ENCODE measurements at regions of chr5 and their contacts with region 1.

Region 1: DNA sequence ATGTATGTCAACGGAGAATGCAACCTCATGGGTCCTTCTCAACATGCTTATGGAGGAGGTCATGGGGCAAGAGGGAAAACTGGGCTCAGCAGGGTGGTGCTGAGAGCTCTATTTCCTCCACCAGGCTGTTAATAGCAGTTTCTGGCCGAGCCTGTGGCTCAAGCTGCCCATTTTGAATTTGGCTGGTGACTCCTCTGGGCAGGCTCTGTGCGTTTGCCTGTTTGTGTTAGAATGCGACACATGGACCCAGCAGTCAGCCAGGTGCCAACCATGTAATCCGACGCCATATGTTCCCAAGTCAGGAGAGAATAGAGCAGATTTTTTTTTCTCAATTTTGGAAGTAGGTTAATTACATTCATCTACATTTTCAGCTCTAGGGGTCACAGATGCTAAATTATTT is 387.7 kb upstream of the CLINT1 start:
- DNase-seq: no peak

Region 2: GRCh38 chr5:158275511-158275910 is 28.9 kb after region 1 on chr5:
- intact Hi-C with region 1: loop called in 1 of 2 experiments (anchors 2 kb)
- DNase-seq: no peak

Region 3: GRCh38 chr5:158485604-158486081 is 239.0 kb after region 1 on chr5:
- intact Hi-C with region 1: no loop called
- DNase-seq: no peak

Region 4: GRCh38 chr5:159802661-159803060 is 1556.0 kb after region 1 on chr5:
- intact Hi-C with region 1: no loop called
- DNase-seq: no peak